ENCODE measurements at regions of chr5 and their contacts with region 1.

Region 1: GRCh38 chr5:80204808-80205614 is 50.8 kb downstream of the SERINC5 start:
- DNase-seq: no peak
- ATAC-seq: peak; percentile 66
- H3K4me3 Mint-ChIP-seq: peak overlapping the region; percentile 7
- H3K27ac Mint-ChIP-seq: peak overlapping the region; percentile 88
- H3K4me1 Mint-ChIP-seq: peaks cover 74% of the 10 kb centered on the region
- H3K27me3 Mint-ChIP-seq: no peaks in the 10 kb centered on the region

Region 2: GRCh38 chr5:80093796-80094195 is 111.2 kb before region 1 on chr5:
- CTCF ChIA-PET with region 1: interaction called, 16 read pairs
- POLR2A ChIA-PET with region 1: no interaction called
- intact Hi-C with region 1: no loop called
- DNase-seq: no peak
- ATAC-seq: no peak
- H3K4me3 Mint-ChIP-seq: no peak overlapping the region
- H3K27ac Mint-ChIP-seq: peak overlapping the region; percentile 39
- H3K4me1 Mint-ChIP-seq: peaks cover 23% of the 10 kb centered on the region
- H3K27me3 Mint-ChIP-seq: no peaks in the 10 kb centered on the region

Region 3: DNA sequence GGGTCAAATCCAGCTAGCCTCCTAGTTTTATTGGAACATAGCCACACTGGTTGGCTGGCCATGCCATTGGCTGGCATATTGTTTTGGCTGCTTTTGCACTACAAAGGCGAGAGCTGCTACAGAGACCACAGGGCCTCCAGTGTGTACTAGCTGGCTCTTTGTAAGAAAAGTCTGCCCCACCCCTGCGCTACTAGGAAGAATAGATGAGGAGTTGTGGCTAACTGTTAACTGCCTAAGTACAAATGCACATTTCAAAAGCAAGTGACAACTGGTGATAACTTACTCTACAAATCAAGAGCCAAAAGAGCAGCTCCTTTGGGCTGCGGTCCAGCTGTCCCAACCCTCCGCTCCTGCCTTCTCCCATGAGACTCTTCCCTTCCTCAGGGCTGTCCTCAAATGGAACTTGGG is 13.0 kb before region 1 on chr5:
- CTCF ChIA-PET with region 1: interaction called, 38 read pairs
- POLR2A ChIA-PET with region 1: interaction called, 5 read pairs
- intact Hi-C with region 1: loop called in 1 of 2 experiments (anchors 2 kb)
- DNase-seq: peak; percentile 55
- ATAC-seq: peak; percentile 42
- H3K4me3 Mint-ChIP-seq: peak overlapping the region; percentile 47
- H3K27ac Mint-ChIP-seq: peak overlapping the region; percentile 99
- H3K4me1 Mint-ChIP-seq: peaks cover 84% of the 10 kb centered on the region
- H3K27me3 Mint-ChIP-seq: no peaks in the 10 kb centered on the region

Region 4: GRCh38 chr5:80216753-80217596 is 12.0 kb after region 1 on chr5:
- CTCF ChIA-PET with region 1: interaction called, 12 read pairs
- POLR2A ChIA-PET with region 1: no interaction called
- intact Hi-C with region 1: no loop called
- DNase-seq: peak; percentile 52
- ATAC-seq: peak; percentile 27
- H3K4me3 Mint-ChIP-seq: peak overlapping the region; percentile 42
- H3K27ac Mint-ChIP-seq: peak overlapping the region; percentile 91
- H3K4me1 Mint-ChIP-seq: peaks cover 91% of the 10 kb centered on the region
- H3K27me3 Mint-ChIP-seq: no peaks in the 10 kb centered on the region

Region 5: GRCh38 chr5:80318212-80318611 is 113.2 kb after region 1 on chr5:
- CTCF ChIA-PET with region 1: no interaction called
- POLR2A ChIA-PET with region 1: no interaction called
- intact Hi-C with region 1: no loop called
- DNase-seq: no peak
- ATAC-seq: no peak
- H3K4me3 Mint-ChIP-seq: no peak overlapping the region
- H3K27ac Mint-ChIP-seq: no peak overlapping the region
- H3K4me1 Mint-ChIP-seq: no peaks in the 10 kb centered on the region
- H3K27me3 Mint-ChIP-seq: peaks cover 10% of the 10 kb centered on the region